ENCODE measurements at regions of chr10 and their contacts with region 1.

Region 1: GRCh38 chr10:66627156-66627555 is 298.7 kb upstream of the LRRTM3 start:
- DNase-seq: peak; percentile 71
- H3K4me3 Mint-ChIP-seq: no peak overlapping the region
- H3K27ac Mint-ChIP-seq: peak overlapping the region; percentile 47
- H3K4me1 Mint-ChIP-seq: peaks cover 19% of the 10 kb centered on the region
- H3K27me3 Mint-ChIP-seq: no peaks in the 10 kb centered on the region
- CTCF ChIP-seq: peak; percentile 48

Region 2: DNA sequence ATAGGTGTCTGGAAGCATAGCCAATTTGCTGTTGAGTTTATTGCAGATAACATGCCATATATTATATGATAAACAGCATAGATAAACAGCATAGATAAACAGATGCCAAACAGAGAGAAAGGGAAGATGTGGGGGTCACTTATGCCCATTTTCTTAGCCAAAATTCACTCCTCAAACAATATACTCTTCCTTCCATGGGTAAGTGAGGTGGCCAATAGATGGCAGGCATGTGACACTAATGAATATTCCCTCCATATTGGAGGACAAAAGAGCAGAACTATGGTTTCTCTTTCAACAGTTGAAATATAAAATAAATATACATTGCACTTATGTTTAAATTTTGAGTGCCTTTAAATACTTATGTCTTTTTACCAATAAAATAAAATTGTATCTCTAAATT is 1893.2 kb before region 1 on chr10:
- CTCF ChIA-PET with region 1: interaction called, 4 read pairs
- POLR2A ChIA-PET with region 1: no interaction called
- intact Hi-C with region 1: loop called (anchors 5 kb)
- DNase-seq: peak; percentile 61
- H3K4me3 Mint-ChIP-seq: no peak overlapping the region
- H3K27ac Mint-ChIP-seq: no peak overlapping the region
- H3K4me1 Mint-ChIP-seq: peaks cover 5% of the 10 kb centered on the region
- H3K27me3 Mint-ChIP-seq: no peaks in the 10 kb centered on the region
- CTCF ChIP-seq: peak; percentile 50

Region 3: DNA sequence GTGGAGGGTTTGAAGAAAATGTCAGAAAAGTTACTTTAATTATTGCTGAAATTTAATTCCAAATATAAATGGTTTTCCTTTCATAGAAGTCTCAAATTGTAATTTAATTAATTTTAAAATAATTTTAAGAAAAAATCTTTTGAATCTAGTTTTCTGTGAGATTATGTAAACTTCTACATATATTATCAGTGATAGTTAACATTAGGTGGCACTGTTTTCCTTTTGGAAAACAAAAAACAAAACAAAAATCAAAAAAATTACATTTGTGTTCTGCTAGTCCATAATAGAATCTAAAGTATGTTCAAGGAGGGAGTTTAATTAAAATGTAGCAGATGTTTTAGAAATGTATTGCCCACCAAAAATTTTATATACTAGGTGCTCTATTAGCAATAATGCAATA is 1649.2 kb before region 1 on chr10:
- CTCF ChIA-PET with region 1: interaction called, 3 read pairs
- POLR2A ChIA-PET with region 1: no interaction called
- intact Hi-C with region 1: loop called (anchors 10 kb)
- DNase-seq: no peak
- H3K4me3 Mint-ChIP-seq: no peak overlapping the region
- H3K27ac Mint-ChIP-seq: no peak overlapping the region
- H3K4me1 Mint-ChIP-seq: no peaks in the 10 kb centered on the region
- H3K27me3 Mint-ChIP-seq: no peaks in the 10 kb centered on the region
- CTCF ChIP-seq: no peak

Region 4: GRCh38 chr10:66180581-66181318 is 446.4 kb before region 1 on chr10:
- CTCF ChIA-PET with region 1: no interaction called
- POLR2A ChIA-PET with region 1: no interaction called
- intact Hi-C with region 1: loop called (anchors 10 kb)
- DNase-seq: peak; percentile 68
- H3K4me3 Mint-ChIP-seq: no peak overlapping the region
- H3K27ac Mint-ChIP-seq: no peak overlapping the region
- H3K4me1 Mint-ChIP-seq: no peaks in the 10 kb centered on the region
- H3K27me3 Mint-ChIP-seq: no peaks in the 10 kb centered on the region
- CTCF ChIP-seq: peak; percentile 59

Region 5: DNA sequence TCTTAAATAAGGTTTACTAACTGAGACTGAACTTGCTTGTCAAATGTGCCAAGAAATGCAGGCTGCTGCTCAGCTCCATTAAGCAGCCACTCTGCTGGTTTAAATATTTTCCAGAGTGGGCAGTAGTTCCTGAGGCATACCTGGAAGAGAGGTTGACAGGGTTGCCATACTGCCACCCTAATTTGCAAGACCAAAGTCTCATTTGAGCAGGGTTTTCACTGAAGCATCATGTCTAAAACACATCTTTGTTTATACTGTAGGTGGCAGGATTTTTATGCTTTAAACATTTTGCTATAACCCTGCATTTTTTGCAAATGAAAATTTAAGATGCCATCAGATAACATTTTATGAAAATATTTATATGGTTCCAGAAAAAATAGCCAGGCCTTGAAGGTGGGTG is 319.3 kb before region 1 on chr10:
- CTCF ChIA-PET with region 1: interaction called, 12 read pairs
- POLR2A ChIA-PET with region 1: no interaction called
- intact Hi-C with region 1: loop called (anchors 1 kb)
- DNase-seq: peak; percentile 9
- H3K4me3 Mint-ChIP-seq: no peak overlapping the region
- H3K27ac Mint-ChIP-seq: no peak overlapping the region
- H3K4me1 Mint-ChIP-seq: no peaks in the 10 kb centered on the region
- H3K27me3 Mint-ChIP-seq: no peaks in the 10 kb centered on the region
- CTCF ChIP-seq: peak; percentile 22

Region 6: GRCh38 chr10:66931340-66931948 is 304.3 kb after region 1 on chr10:
- CTCF ChIA-PET with region 1: interaction called, 5 read pairs
- POLR2A ChIA-PET with region 1: no interaction called
- intact Hi-C with region 1: loop called (anchors 5 kb)
- DNase-seq: peak; percentile 72
- H3K4me3 Mint-ChIP-seq: no peak overlapping the region
- H3K27ac Mint-ChIP-seq: no peak overlapping the region
- H3K4me1 Mint-ChIP-seq: no peaks in the 10 kb centered on the region
- H3K27me3 Mint-ChIP-seq: peaks cover 52% of the 10 kb centered on the region
- CTCF ChIP-seq: peak; percentile 86

Measured in MCF 10A (cell line).